ENCODE measurements at regions of chr16 and their contacts with region 1.

Region 1: GRCh38 chr16:66934153-66934838 is at the start of gene CIAO2B:
- DNase-seq: peak; percentile 89
- ATAC-seq: peak; percentile 84
- H3K4me3 Mint-ChIP-seq: peak within 1 kb of the TSS; percentile 99
- H3K27ac Mint-ChIP-seq: peak within 1 kb of the TSS; percentile 98
- H3K4me1 Mint-ChIP-seq: peaks cover 47% of the 10 kb centered on the region
- H3K27me3 Mint-ChIP-seq: no peaks in the 10 kb centered on the region
- CTCF ChIP-seq: no peak
- total RNA-seq, gene CIAO2B: 150 to 162 TPM

Region 2: GRCh38 chr16:66880288-66881013 is 53.8 kb before region 1 on chr16 and contains the start of gene PDP2:
- CTCF ChIA-PET with region 1: interaction called, 3 read pairs
- POLR2A ChIA-PET with region 1: interaction called, 8 read pairs
- intact Hi-C with region 1: loop called (anchors 5 kb)
- DNase-seq: peak; percentile 96
- ATAC-seq: peak; percentile 90
- H3K4me3 Mint-ChIP-seq: peak within 1 kb of the TSS; percentile 95
- H3K27ac Mint-ChIP-seq: peak within 1 kb of the TSS; percentile 97
- H3K4me1 Mint-ChIP-seq: peaks cover 55% of the 10 kb centered on the region
- H3K27me3 Mint-ChIP-seq: no peaks in the 10 kb centered on the region
- CTCF ChIP-seq: no peak
- total RNA-seq, gene PDP2: 31.2 to 38.1 TPM

Region 3: DNA sequence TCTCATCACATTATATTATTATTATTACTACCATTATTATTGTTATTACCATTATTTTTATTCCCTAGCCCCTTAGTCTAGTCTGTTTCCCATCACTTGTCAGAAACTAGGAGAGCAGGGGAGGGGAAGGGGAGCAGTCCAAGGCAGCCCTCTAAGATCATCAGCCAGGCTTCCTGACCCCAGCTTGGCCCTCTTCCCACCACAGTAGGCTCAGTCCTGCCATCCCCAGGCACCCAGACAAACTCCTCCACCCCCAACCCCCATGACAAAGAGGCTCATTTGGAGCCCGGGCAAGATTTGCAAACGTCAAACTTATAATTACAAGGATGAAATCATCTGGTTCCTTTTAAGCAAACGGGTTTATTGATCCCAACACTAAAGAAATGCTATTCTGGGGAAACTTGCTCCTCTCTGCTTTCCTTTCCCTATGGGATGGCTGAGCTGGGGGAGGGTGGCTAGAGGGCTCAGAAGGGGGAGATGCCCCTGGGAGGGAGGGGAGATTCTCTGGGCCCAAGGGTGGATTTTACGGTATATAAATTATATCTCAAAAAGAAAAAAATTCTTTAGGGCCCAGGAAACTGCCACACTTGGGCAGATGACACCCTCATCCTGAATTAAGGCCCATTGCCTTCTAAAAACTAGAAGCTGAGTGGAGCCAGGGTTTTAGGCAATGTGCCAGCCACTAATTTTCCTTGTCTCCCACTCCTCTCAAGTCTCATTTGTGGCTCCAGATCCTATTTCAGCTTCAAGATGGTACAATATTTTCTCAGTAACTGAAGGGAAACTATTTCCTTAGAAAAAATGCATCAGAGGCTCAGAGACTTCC is 90.3 kb after region 1 on chr16:
- CTCF ChIA-PET with region 1: no interaction called
- POLR2A ChIA-PET with region 1: no interaction called
- intact Hi-C with region 1: no loop called
- DNase-seq: no peak
- ATAC-seq: no peak
- H3K4me3 Mint-ChIP-seq: no peak overlapping the region
- H3K27ac Mint-ChIP-seq: no peak overlapping the region
- H3K4me1 Mint-ChIP-seq: peaks cover 19% of the 10 kb centered on the region
- H3K27me3 Mint-ChIP-seq: no peaks in the 10 kb centered on the region
- CTCF ChIP-seq: no peak

Measured in activated CD8-positive, alpha-beta T cell treated with anti-CD3 and anti-CD28 coated beads for 36 hours (primary cell).